ENCODE measurements at regions of chr19 and their contacts with region 1.

Region 1: GRCh38 chr19:36169084-36169760 is 17.0 kb upstream of the COX7A1 start:
- DNase-seq: no peak
- H3K4me3 Mint-ChIP-seq: no peak overlapping the region
- H3K27ac Mint-ChIP-seq: peak overlapping the region; percentile 3
- H3K4me1 Mint-ChIP-seq: no peaks in the 10 kb centered on the region
- H3K27me3 Mint-ChIP-seq: no peaks in the 10 kb centered on the region
- CTCF ChIP-seq: no peak

Region 2: DNA sequence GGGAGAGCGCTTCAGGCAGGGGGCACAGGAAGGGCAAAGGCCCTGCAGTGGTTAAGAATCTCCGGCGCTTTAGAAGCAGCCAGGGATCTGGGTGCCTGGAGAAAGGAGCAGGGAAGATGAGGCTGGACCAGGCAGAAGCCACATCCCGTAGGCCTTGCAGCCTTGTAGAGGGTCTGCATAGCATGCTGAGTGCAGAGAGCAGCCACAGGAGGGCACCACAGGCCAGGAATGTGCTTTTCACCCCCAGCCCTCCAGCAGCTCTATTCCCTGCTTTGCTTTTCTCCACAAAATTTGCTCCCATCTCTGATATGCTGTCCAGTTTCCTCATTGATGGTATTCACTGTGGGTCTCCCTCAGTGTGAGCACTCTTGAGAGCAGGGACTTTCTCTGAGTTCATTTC is 108.8 kb before region 1 on chr19:
- CTCF ChIA-PET with region 1: interaction called, 7 read pairs
- POLR2A ChIA-PET with region 1: no interaction called
- intact Hi-C with region 1: loop called (anchors 1 kb)
- DNase-seq: peak; percentile 50
- H3K4me3 Mint-ChIP-seq: no peak overlapping the region
- H3K27ac Mint-ChIP-seq: no peak overlapping the region
- H3K4me1 Mint-ChIP-seq: peaks cover 4% of the 10 kb centered on the region
- H3K27me3 Mint-ChIP-seq: no peaks in the 10 kb centered on the region
- CTCF ChIP-seq: peak; percentile 65

Region 3: GRCh38 chr19:36139473-36140303 is 29.5 kb before region 1 on chr19 and contains the start of gene CAPNS1:
- CTCF ChIA-PET with region 1: interaction called, 8 read pairs
- POLR2A ChIA-PET with region 1: interaction called, 22 read pairs
- intact Hi-C with region 1: no loop called
- DNase-seq: peak; percentile 97
- H3K4me3 Mint-ChIP-seq: peak within 1 kb of the TSS; percentile 97
- H3K27ac Mint-ChIP-seq: peak within 1 kb of the TSS; percentile 97
- H3K4me1 Mint-ChIP-seq: peaks cover 38% of the 10 kb centered on the region
- H3K27me3 Mint-ChIP-seq: no peaks in the 10 kb centered on the region
- CTCF ChIP-seq: no peak
- total RNA-seq, gene CAPNS1: 666 and 788 TPM in 2 replicates

Region 4: GRCh38 chr19:36151144-36152018 is 17.8 kb before region 1 on chr19:
- CTCF ChIA-PET with region 1: interaction called, 11 read pairs
- POLR2A ChIA-PET with region 1: interaction called, 4 read pairs
- intact Hi-C with region 1: no loop called
- DNase-seq: no peak
- H3K4me3 Mint-ChIP-seq: no peak overlapping the region
- H3K27ac Mint-ChIP-seq: peak overlapping the region; percentile 17
- H3K4me1 Mint-ChIP-seq: peaks cover 29% of the 10 kb centered on the region
- H3K27me3 Mint-ChIP-seq: no peaks in the 10 kb centered on the region
- CTCF ChIP-seq: no peak

Measured in MCF 10A (cell line).